Esophagus muscularis mucosa (tissue), 4 donors: ENCODE measurements at regions of chr20 and their contacts with region 1.

Region 1: DNA sequence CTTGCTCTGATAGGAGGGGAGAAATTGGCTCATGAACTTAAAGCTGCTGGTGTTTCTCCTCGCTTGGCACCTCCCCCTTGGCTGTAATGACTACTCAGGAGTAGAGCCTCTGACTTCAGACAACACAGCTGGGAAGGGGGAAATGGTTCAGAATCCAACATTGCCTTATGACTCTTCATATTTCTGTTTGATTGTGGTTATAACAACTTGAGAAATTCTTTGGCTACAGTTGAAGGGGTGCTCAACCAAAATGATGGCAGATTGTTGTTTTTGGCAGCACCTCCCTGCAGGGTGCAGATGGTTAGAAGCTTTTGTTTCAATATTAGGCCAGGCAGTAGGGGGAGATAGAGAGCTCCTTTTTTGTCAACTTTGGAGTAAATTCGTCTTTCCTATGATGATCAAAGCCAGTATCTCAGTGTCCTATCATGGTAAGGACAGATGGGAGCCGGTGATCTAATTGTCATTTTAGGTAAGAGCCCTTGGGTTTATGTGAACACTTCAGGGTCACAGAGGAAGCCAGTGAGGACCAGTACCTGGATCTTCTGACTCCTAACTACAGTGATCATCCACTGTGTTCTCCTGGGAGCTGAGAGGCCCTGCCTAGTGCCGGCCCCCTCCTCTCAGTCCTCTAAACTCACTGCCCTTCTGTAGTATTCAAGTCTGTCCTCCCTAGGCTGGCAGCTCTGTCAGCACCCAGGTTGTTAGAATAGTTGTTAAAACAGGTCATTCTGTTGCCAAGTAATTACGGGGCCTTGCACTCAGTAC is 39.9 kb downstream of the RPRD1B start:
- DNase-seq: peak; percentile 94
- H3K4me3 ChIP-seq: no peak overlapping the region
- H3K27ac ChIP-seq: peak overlapping the region; percentile 80 to 90 (median 82)
- H3K4me1 ChIP-seq: peaks cover 30 to 61% (median 60%) of the 10 kb centered on the region in 4 donors
- H3K27me3 ChIP-seq: no peaks in the 10 kb centered on the region
- CTCF ChIP-seq: peak; percentile 80 to 84 (median 84)
- EP300 ChIP-seq: no peak
- POLR2A ChIP-seq: no peak

Region 2: DNA sequence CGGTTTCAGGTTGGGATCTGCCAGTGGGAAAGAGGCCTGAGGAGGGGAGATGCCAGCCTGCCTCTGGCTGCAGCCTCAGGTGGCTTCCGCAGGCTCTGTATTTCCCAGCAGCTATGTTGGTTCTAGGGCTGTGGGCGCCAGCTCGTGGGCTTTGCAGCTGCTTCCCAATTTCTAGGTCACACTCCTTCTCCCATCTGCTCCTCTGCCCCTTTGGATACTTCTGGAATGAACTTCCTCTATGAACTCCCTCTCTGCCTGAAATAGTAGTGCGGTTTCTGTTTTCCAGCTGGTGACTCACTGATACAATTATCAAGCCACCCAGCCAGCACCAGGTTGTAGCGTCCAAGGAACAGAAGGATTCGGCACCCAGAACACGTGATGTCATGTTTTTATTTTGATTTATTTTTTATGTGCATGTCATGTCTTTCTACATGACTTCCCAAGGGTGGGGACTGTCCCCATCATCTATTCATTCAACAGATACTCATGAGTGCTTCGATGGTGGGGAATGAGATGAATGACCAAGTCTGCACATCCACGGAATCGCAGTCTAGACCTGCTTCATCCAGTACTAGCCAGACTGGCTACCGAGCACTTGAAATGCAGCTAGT is 53.6 kb after region 1 on chr20:
- intact Hi-C with region 1: loop called (anchors 5 kb)
- DNase-seq: no peak
- H3K4me3 ChIP-seq: no peak overlapping the region
- H3K27ac ChIP-seq: peak overlapping the region; percentile 72 to 91 (median 84)
- H3K4me1 ChIP-seq: peaks cover 35 to 44% (median 41%) of the 10 kb centered on the region in 4 donors
- H3K27me3 ChIP-seq: no peaks in the 10 kb centered on the region
- CTCF ChIP-seq: no peak
- EP300 ChIP-seq: no peak
- POLR2A ChIP-seq: no peak

Region 3: DNA sequence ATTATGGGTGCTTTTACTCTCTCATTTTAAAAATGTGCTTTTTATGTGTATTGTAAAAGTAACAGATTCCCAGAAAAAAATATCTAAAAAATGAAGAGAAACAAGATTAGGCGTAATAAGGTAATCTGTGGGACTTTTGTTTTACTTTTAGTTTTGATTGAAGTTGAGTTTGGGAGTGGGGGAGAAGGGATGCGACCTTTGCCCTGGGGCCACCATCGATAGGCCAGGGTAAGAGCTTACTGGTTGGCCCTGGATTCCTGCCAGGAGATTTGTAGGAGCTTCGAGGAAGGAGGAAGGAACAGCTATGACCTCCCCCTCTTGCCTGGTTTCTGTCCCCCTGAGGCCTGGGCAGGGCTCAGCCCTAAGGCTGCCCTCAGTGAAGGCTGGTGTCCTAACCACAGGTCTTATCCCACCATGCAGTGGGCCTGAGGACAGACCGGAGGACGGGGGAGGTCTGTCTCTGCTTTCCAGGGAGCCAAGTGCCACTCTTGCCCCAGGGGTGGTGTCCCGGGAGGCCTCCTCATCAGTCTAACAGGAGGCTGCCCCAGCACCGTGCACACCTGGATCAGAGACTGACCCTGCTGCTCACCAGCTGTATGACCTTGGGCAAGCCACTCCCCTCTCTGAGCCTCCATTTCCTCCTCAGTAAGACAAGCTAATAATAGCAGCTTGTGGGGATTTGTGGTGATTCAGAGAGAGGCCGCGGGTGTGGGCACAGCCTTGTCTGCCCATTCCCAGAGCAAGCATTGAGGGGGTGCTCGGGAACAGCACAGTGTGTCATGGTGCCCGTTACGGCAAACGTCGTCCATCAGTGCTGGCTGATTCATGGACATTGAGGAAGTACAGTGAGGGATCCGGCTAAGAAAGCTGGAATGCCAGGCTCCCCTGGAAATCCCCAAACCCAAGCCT is 70.4 kb after region 1 on chr20:
- intact Hi-C with region 1: no loop called
- DNase-seq: no peak
- H3K4me3 ChIP-seq: no peak overlapping the region
- H3K27ac ChIP-seq: peak overlapping the region; percentile 77 to 87 (median 82)
- H3K4me1 ChIP-seq: peaks cover 33 to 43% (median 37%) of the 10 kb centered on the region in 4 donors
- H3K27me3 ChIP-seq: no peaks in the 10 kb centered on the region
- CTCF ChIP-seq: no peak
- EP300 ChIP-seq: peak; percentile 57
- POLR2A ChIP-seq: no peak